ENCODE measurements at regions of chr17 and their contacts with region 1.

Region 1: DNA sequence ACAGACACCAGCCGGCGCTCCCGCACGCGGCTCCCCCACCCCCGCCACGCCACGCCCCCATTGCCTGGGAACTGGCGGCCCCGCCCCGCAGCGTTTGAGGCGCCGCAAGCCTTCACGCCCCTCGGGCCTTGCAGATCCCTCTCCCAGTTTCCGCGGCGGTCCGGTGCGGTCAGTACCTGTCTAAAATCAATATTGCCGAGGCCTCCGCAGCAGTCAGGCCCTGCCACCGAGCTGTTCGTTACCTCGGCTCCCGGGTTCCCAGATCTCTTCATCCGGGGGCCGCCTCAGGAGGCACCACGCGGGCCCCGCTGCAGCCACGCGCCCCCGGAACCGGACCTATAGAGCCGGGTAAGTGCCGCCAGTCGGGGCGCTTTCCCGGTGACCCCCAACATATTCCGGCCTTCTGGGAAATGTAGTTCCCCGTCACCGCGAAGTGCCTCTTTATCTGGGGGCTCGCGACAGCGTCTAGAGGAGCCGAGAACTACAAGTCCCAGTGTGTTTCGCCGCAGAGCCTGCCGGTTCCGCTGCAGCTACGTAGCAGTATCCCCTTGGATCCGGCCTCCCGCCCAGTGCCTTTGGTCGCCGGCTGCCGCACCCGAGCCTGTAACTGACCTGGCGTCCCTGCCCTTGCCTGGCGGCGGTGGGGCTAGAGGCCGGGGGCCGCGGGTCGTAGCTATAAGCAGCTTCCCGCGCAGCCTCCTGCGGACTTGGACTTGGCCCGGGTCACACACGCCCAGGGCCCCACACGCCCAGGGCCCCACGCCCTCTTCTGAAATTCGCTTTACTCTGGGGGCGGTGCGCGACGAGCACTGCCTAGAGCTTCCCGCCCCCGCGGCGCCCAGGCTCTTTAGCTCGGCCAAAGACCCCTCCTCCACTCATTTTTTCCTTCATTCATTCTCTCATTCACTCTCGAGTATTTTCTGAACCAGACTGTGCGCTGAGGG is at the start of gene PEMT:
- DNase-seq: peak; percentile 88
- ATAC-seq: peak; percentile 94
- H3K4me3 Mint-ChIP-seq: peak within 1 kb of the TSS; percentile 90
- H3K27ac Mint-ChIP-seq: peak within 1 kb of the TSS; percentile 84
- H3K4me1 Mint-ChIP-seq: peaks cover 15% of the 10 kb centered on the region
- H3K27me3 Mint-ChIP-seq: no peaks in the 10 kb centered on the region
- CTCF ChIP-seq: no peak
- total RNA-seq, gene PEMT: 11.4 and 12.2 TPM in 2 replicates

Region 2: DNA sequence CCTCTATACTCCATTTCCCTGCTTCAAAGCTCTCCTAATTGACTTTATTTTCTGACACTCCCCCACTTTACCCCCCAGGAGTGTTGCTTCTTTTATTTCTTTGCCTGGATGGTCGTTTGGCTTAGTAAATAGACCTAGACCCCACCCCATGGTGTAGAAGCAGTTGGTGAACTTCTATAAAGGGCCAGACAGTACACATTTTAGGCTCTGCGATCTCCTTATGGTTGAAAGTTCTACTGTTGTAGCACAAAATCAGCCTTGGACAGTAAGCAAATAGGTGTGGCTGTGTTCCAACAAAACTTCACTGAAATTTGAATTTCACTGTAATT is 1054.5 kb before region 1 on chr17:
- CTCF ChIA-PET with region 1: no interaction called
- POLR2A ChIA-PET with region 1: no interaction called
- intact Hi-C with region 1: loop called (anchors 2 kb)
- DNase-seq: no peak
- ATAC-seq: no peak
- H3K4me3 Mint-ChIP-seq: peak overlapping the region; percentile 98
- H3K27ac Mint-ChIP-seq: peak overlapping the region; percentile 99
- H3K4me1 Mint-ChIP-seq: peaks cover 21% of the 10 kb centered on the region
- H3K27me3 Mint-ChIP-seq: no peaks in the 10 kb centered on the region
- CTCF ChIP-seq: no peak

Region 3: GRCh38 chr17:17237026-17237799 is 354.4 kb before region 1 on chr17 and contains the start of gene FLCN:
- CTCF ChIA-PET with region 1: no interaction called
- POLR2A ChIA-PET with region 1: no interaction called
- intact Hi-C with region 1: loop called (anchors 2 kb)
- DNase-seq: peak; percentile 89
- ATAC-seq: peak; percentile 90
- H3K4me3 Mint-ChIP-seq: peak within 1 kb of the TSS; percentile 96
- H3K27ac Mint-ChIP-seq: peak within 1 kb of the TSS; percentile 99
- H3K4me1 Mint-ChIP-seq: peaks cover 14% of the 10 kb centered on the region
- H3K27me3 Mint-ChIP-seq: no peaks in the 10 kb centered on the region
- CTCF ChIP-seq: no peak
- total RNA-seq, gene FLCN: 54.5 and 62.3 TPM in 2 replicates

Region 4: GRCh38 chr17:17476865-17477467 is 114.7 kb before region 1 on chr17 and contains the start of gene MED9:
- CTCF ChIA-PET with region 1: no interaction called
- POLR2A ChIA-PET with region 1: interaction called, 5 read pairs
- intact Hi-C with region 1: loop called (anchors 5 kb)
- DNase-seq: peak; percentile 93
- ATAC-seq: peak; percentile 100
- H3K4me3 Mint-ChIP-seq: peak within 1 kb of the TSS; percentile 90
- H3K27ac Mint-ChIP-seq: peak within 1 kb of the TSS; percentile 84
- H3K4me1 Mint-ChIP-seq: peaks cover 30% of the 10 kb centered on the region
- H3K27me3 Mint-ChIP-seq: no peaks in the 10 kb centered on the region
- CTCF ChIP-seq: no peak
- total RNA-seq, gene MED9: 16.2 and 20.1 TPM in 2 replicates

Region 5: GRCh38 chr17:17605729-17606088 is 14.1 kb after region 1 on chr17:
- CTCF ChIA-PET with region 1: no interaction called
- POLR2A ChIA-PET with region 1: no interaction called
- intact Hi-C with region 1: no loop called
- DNase-seq: no peak
- ATAC-seq: no peak
- H3K4me3 Mint-ChIP-seq: no peak overlapping the region
- H3K27ac Mint-ChIP-seq: no peak overlapping the region
- H3K4me1 Mint-ChIP-seq: no peaks in the 10 kb centered on the region
- H3K27me3 Mint-ChIP-seq: no peaks in the 10 kb centered on the region
- CTCF ChIP-seq: no peak

Region 6: DNA sequence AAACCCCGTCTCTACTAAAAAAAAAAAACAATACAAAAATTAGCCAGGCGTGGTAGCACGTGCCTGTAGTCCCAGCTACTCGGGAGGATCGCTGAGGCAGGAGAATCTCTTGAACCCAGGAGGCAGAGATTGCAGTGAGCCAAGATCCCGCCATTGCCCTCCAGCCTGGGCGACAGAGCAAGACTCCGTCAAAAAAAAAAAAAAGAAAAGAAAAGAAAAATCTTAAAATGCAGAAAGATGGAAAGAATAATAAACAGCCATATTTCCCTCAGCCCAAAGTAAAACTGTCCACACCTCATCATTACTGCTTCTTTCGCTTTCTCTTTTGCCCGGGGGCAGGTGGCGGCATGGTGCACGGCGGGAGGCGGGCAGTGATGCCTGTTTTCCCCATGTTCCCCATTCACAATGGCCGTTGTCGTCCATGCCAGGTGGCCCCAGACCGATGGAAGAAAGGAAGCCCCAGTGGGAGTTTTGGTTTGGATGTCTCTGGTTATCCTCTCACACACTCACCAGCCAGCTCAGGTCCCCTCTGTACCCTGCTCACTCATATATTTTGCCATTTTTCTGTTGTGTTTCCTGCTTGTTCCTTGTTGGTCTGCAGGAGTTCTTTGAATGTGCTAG is 36.9 kb after region 1 on chr17:
- CTCF ChIA-PET with region 1: no interaction called
- POLR2A ChIA-PET with region 1: interaction called, 4 read pairs
- intact Hi-C with region 1: loop called (anchors 5 kb)
- DNase-seq: peak; percentile 20
- ATAC-seq: peak; percentile 90
- H3K4me3 Mint-ChIP-seq: peak overlapping the region; percentile 90
- H3K27ac Mint-ChIP-seq: peak overlapping the region; percentile 90
- H3K4me1 Mint-ChIP-seq: peaks cover 11% of the 10 kb centered on the region
- H3K27me3 Mint-ChIP-seq: no peaks in the 10 kb centered on the region
- CTCF ChIP-seq: no peak

Region 7: DNA sequence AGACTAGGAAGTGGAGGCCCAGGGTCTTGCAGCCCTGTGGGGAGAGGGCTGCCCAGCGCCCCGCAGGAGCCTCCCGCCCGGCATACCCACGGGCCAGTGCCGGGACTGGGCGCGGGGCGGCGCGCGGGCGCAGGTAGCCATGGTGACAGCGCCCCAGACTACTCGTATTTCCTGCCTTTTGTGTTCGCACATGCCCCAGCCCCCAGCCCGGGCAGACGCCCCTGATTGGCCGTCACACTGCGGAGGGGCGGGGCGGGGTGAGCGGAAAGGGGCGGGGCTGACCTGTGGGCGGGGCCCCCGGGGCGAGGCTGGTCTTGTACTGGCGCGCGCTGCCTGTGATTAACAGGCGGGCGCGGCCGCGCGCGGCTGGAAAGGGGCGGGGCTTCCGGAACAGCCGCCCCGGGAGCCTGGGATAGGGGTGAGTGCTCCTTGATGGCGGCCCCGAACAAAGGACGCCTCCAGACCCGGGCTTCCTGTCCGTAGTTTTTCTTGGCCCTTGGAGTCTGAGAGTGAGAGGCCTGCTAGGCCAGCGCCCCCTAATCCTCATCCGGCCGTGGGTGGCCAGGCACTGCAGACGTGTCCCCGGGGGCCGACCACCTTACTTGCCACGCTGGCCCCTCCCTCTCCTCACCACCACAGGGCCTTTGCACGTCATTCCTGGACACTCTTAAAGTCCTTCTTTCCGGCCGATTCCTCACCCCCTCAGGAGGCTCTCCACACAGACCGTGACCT is 160.6 kb after region 1 on chr17:
- CTCF ChIA-PET with region 1: no interaction called
- POLR2A ChIA-PET with region 1: no interaction called
- intact Hi-C with region 1: loop called (anchors 1 kb)
- DNase-seq: peak; percentile 93
- ATAC-seq: peak; percentile 85
- H3K4me3 Mint-ChIP-seq: peak overlapping the region; percentile 86
- H3K27ac Mint-ChIP-seq: peak overlapping the region; percentile 98
- H3K4me1 Mint-ChIP-seq: peaks cover 88% of the 10 kb centered on the region
- H3K27me3 Mint-ChIP-seq: no peaks in the 10 kb centered on the region
- CTCF ChIP-seq: no peak

Region 8: GRCh38 chr17:18038861-18039534 is 447.4 kb after region 1 on chr17 and contains the starts of genes ATPAF2 and GID4:
- CTCF ChIA-PET with region 1: no interaction called
- POLR2A ChIA-PET with region 1: no interaction called
- intact Hi-C with region 1: loop called (anchors 1 kb)
- DNase-seq: peak; percentile 99
- ATAC-seq: peak; percentile 87
- H3K4me3 Mint-ChIP-seq: peak within 1 kb of the TSS; percentile 94
- H3K27ac Mint-ChIP-seq: peak within 1 kb of the TSS; percentile 92
- H3K4me1 Mint-ChIP-seq: peaks cover 54% of the 10 kb centered on the region
- H3K27me3 Mint-ChIP-seq: no peaks in the 10 kb centered on the region
- CTCF ChIP-seq: no peak
- total RNA-seq, gene ATPAF2: 60.7 and 69.1 TPM in 2 replicates
- total RNA-seq, gene GID4: 6.8 and 7.3 TPM in 2 replicates

Measured in activated B cell treated with CpG ODN at 0.5 μM for 24 hours (primary cell).